AG04450 (cell line): ENCODE measurements at regions of chr16 and their contacts with region 1.

Region 1: DNA sequence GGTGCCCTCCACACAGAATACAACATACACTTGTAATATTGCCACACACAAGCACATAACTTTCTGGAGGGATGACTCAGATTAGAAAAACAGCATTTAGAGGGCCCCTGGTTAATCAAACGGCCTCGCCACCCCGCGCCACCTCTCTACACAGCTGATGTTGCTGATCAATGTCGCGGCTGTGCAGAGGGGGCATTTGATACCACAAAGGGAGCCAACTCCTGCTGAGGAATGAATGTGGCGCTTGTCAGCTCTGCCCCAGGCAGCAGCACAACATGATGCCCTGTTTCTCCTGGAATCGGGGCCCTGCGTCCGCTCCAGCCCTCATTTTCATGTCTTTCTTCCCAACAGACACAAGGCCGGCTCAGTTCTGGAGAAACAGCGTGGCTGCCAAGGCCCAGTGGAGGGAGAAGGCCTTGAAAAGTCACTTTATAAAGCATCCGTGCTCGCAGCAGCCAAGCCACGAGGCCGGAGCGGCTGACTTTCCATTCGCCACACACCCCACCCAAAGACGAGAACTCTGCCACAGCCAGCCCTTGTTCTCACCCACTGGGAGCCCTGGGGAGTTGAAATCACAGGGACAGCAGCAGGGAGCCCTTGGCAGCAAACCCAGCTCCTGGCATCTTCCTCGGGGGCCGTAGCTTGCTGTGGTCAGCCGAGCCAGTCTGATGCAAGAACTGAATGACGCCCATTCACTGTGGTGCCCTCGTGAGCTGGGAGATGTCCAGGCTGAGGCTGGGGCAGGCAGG is 65.6 kb downstream of the XYLT1 start:
- DNase-seq: no peak
- H3K4me3 ChIP-seq: no peak overlapping the region
- H3K27ac ChIP-seq: peak overlapping the region; percentile 78
- H3K27me3 ChIP-seq: no peaks in the 10 kb centered on the region
- CTCF ChIP-seq: no peak

Region 2: DNA sequence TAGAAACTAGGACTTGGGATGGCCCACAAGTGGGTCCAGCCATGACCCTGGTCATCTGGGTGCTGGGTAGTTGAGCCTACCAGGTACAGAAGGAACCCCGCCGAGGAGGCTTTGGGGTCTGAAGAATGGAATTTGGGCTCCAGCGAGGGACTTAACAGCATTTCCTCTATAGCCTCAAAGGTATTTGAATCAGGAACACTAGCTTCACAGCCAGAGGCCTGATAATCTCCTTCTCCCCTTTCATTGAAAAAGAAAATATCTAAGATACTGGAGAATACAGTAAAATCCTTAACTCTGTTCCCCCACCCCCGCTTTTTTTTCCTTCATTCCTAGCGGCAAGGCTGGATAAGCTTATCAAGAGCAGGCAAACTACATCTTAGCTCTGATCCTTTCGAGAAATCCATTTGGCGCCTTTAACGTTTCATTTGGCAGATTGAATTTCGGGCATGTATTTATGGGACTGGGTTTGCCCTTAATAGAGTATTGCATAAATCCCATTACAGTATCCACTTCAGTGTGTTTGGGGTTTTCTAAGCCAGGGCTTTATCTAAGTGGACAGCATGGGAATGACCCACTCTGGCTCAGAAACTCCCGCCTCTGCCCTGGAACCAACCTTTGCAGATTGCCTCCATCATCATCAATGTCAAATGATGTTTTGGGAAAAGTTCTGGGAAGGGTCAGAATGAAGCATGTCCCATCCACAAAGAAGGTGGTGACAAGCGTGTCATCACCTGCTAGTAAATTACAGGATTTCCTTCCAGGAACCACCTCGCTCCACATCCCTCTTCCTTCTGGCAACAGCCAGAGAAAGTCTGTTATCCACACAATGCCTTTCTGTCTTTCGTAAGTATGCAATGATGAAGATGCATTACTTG is 28.7 kb after region 1 on chr16:
- CTCF ChIA-PET with region 1: no interaction called
- POLR2A ChIA-PET with region 1: interaction called, 10 read pairs
- DNase-seq: no peak
- H3K4me3 ChIP-seq: no peak overlapping the region
- H3K27ac ChIP-seq: no peak overlapping the region
- H3K27me3 ChIP-seq: no peaks in the 10 kb centered on the region
- CTCF ChIP-seq: no peak

Region 3: GRCh38 chr16:18816286-18816685 is 1411.2 kb after region 1 on chr16:
- CTCF ChIA-PET with region 1: no interaction called
- POLR2A ChIA-PET with region 1: interaction called, 11 read pairs
- DNase-seq: no peak
- H3K4me3 ChIP-seq: no peak overlapping the region
- H3K27ac ChIP-seq: no peak overlapping the region
- H3K27me3 ChIP-seq: no peaks in the 10 kb centered on the region
- CTCF ChIP-seq: no peak